ENCODE measurements at regions of chr3 and their contacts with region 1.

Region 1: GRCh38 chr3:184362668-184363540 is 1.4 kb downstream of the POLR2H start:
- DNase-seq: peak; percentile 98
- H3K4me3 ChIP-seq: peak overlapping the region; percentile 75 to 88 (median 85)
- H3K27ac ChIP-seq: peak overlapping the region; percentile 80
- H3K4me1 ChIP-seq: peaks cover 20% of the 10 kb centered on the region
- H3K27me3 ChIP-seq: no peaks in the 10 kb centered on the region
- CTCF ChIP-seq: peak; percentile 27 to 58

Region 2: DNA sequence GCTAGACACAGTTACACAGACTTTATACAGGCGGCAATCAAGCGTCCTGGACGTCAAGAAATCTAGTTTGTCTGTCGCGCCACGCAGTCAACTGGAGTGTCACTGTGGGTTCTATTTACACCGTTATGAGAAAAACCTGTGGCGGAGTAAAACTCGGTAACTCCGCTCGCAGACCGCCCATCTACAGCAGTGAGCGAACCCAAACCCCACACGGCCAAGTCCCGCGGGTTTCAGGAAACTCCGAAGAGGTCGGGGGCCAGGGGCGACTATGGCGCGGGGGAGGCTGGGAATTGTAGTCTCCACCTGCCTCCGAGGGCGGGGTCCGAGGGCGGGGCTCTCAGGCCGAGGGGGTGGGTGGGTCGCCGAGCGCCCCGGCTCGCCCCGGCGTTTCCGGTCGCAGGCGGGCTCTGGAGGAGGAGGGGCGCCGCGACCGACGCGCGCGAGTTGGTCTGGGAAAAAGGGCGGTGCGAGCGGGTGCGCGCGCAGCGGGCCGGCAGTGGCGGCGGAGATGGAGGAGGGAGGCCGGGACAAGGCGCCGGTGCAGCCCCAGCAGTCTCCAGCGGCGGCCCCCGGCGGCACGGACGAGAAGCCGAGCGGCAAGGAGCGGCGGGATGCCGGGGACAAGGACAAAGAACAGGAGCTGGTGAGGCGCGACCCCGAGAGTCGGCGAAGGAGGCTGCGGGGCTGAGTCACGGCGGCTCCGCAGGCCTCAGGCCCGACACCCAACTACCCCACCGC is 64.0 kb before region 1 on chr3 and contains the start of gene PSMD2:
- CTCF ChIA-PET with region 1: interaction called, 4 read pairs
- dilution Hi-C with region 1: no loop called
- in situ Hi-C with region 1: no loop called
- intact Hi-C with region 1: loop called (anchors 2 kb)
- DNase-seq: peak; percentile 95
- H3K4me3 ChIP-seq: peak within 1 kb of the TSS; percentile 80 to 100 (median 90)
- H3K27ac ChIP-seq: peak within 1 kb of the TSS; percentile 79
- H3K4me1 ChIP-seq: peaks cover 16% of the 10 kb centered on the region
- H3K27me3 ChIP-seq: no peaks in the 10 kb centered on the region
- CTCF ChIP-seq: no peak
- total RNA-seq, gene PSMD2: 276 to 541 TPM

Region 3: DNA sequence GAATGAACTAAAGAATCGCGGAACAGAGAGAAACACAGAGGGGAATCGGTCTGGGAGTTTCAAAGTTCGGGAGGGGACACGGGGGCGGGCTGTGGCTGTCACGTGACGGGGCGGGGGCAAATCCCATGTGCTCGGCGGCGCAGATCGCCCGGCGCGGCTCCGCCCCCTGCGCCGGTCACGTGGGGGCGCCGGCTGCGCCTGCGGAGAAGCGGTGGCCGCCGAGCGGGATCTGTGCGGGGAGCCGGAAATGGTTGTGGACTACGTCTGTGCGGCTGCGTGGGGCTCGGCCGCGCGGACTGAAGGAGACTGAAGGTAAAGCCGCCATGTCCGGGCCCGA is 48.6 kb before region 1 on chr3 and contains the start of gene EIF4G1:
- CTCF ChIA-PET with region 1: no interaction called
- dilution Hi-C with region 1: no loop called
- in situ Hi-C with region 1: no loop called
- intact Hi-C with region 1: loop called (anchors 1 kb)
- DNase-seq: peak; percentile 92
- H3K4me3 ChIP-seq: peak within 1 kb of the TSS; percentile 45 to 81 (median 73)
- H3K27ac ChIP-seq: peak within 1 kb of the TSS; percentile 69
- H3K4me1 ChIP-seq: peaks cover 22% of the 10 kb centered on the region
- H3K27me3 ChIP-seq: no peaks in the 10 kb centered on the region
- CTCF ChIP-seq: no peak
- total RNA-seq, gene EIF4G1: 278 to 534 TPM

Region 4: DNA sequence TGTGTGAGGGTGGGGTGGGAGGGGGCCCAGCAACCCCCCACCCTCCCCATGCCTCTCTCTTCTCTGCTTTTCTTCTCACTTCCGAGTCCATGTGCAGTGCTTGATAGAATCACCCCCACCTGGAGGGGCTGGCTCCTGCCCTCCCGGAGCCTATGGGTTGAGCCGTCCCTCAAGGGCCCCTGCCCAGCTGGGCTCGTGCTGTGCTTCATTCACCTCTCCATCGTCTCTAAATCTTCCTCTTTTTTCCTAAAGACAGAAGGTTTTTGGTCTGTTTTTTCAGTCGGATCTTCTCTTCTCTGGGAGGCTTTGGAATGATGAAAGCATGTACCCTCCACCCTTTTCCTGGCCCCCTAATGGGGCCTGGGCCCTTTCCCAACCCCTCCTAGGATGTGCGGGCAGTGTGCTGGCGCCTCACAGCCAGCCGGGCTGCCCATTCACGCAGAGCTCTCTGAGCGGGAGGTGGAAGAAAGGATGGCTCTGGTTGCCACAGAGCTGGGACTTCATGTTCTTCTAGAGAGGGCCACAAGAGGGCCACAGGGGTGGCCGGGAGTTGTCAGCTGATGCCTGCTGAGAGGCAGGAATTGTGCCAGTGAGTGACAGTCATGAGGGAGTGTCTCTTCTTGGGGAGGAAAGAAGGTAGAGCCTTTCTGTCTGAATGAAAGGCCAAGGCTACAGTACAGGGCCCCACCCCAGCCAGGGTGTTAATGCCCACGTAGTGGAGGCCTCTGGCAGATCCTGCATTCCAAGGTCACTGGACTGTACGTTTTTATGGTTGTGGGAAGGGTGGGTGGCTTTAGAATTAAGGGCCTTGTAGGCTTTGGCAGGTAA is 17.4 kb before region 1 on chr3:
- CTCF ChIA-PET with region 1: no interaction called
- dilution Hi-C with region 1: no loop called
- in situ Hi-C with region 1: no loop called
- intact Hi-C with region 1: loop called (anchors 1 kb)
- DNase-seq: peak; percentile 72
- H3K4me3 ChIP-seq: no peak overlapping the region
- H3K27ac ChIP-seq: no peak overlapping the region
- H3K4me1 ChIP-seq: peaks cover 45% of the 10 kb centered on the region
- H3K27me3 ChIP-seq: no peaks in the 10 kb centered on the region
- CTCF ChIP-seq: peak; percentile 43 to 72

Region 5: DNA sequence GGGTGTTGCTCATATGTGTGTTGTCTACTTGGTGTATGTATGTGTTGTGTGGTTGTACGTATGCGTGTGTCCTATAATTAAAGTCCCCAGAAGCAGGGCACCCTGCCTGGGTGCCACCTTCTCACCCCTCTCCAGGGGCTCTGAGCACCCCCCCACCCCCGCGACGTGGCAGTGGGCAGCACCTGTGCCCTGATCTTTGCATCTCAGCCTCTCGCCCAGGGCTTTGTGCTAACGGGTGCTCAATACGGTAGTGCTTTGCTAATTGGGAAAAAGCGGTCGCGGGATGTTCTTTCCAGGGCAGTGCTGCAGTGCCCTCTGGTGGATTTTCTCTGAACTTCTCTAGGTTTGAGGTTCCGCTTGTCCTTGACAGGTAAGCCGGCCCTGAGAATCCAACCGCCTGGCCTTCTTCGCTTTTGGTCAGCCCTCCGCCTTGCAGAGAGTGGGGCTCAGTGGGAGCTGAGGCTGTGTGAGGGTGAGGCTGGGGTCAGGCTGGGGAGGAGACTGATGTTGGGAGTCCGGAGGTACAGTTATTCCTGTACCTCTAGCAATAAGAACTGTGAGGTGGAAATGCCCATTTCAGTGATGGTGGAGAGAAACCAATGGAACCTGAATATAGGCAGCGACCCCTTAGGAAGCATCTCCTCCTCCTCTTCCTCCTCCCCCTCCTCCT is 181.1 kb after region 1 on chr3:
- CTCF ChIA-PET with region 1: no interaction called
- dilution Hi-C with region 1: loop called (anchors 5 kb)
- in situ Hi-C with region 1: no loop called
- intact Hi-C with region 1: loop called (anchors 2 kb)
- DNase-seq: peak; percentile 72
- H3K4me3 ChIP-seq: no peak overlapping the region
- H3K27ac ChIP-seq: no peak overlapping the region
- H3K4me1 ChIP-seq: peaks cover 2% of the 10 kb centered on the region
- H3K27me3 ChIP-seq: no peaks in the 10 kb centered on the region
- CTCF ChIP-seq: peak; percentile 84 to 86

Region 6: GRCh38 chr3:184556582-184557347 is 193.9 kb after region 1 on chr3:
- CTCF ChIA-PET with region 1: no interaction called
- dilution Hi-C with region 1: no loop called
- in situ Hi-C with region 1: no loop called
- intact Hi-C with region 1: no loop called
- DNase-seq: no peak
- H3K4me3 ChIP-seq: no peak overlapping the region
- H3K27ac ChIP-seq: no peak overlapping the region
- H3K4me1 ChIP-seq: peaks cover 8% of the 10 kb centered on the region
- H3K27me3 ChIP-seq: no peaks in the 10 kb centered on the region
- CTCF ChIP-seq: no peak

Region 7: DNA sequence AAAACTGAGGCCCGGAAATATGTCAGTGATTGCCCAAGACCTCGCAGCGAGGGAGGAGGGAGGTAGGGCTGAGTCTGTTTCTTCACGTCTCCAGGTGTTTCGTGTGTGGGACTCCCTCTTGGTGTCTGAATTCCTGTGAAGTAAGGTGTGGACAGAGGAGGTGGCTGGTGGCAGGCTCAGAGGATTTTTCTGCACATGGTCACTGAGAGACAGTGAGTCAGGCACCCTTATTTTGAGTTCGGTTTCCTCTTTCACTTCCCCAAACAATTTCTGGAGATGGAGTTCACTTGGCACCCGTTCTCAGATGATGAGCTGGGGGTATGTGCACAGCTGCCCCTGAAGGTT is 402.8 kb after region 1 on chr3:
- CTCF ChIA-PET with region 1: no interaction called
- dilution Hi-C with region 1: no loop called
- in situ Hi-C with region 1: no loop called
- intact Hi-C with region 1: loop called (anchors 10 kb)
- DNase-seq: peak; percentile 95
- H3K4me3 ChIP-seq: no peak overlapping the region
- H3K27ac ChIP-seq: peak overlapping the region; percentile 99
- H3K4me1 ChIP-seq: peaks cover 26% of the 10 kb centered on the region
- H3K27me3 ChIP-seq: no peaks in the 10 kb centered on the region
- CTCF ChIP-seq: no peak

Region 8: DNA sequence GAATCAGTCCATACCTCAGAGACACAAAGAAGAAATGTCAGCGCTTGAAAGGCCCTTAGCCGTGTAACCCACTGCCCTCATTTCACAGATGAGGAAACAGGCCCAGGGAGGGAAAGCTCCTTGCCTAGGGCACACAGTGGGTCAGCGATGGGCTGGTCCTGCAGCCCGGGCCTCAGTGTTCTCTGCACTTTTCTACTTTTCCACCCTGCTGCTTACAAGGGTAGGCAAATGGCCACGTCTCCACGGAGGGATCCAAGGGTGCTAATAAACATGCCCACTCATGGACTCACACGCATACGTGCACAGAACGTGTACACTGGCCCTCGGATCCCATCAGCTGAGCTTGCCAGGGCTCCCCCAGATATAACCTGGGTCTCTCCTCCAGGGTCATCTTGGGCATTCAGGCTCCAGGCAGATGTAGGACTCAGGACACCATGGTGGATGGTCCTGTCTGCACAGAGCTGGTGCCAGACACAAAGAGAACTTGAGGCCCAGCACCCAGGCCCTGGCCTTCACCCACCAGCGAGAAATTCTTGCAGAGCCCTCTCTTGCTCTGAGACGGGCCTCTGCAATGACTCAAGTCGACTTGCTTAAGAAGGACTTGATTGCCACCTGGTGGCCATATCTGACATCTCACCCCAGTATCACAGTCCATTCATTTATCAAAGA is 414.6 kb after region 1 on chr3:
- CTCF ChIA-PET with region 1: no interaction called
- dilution Hi-C with region 1: no loop called
- in situ Hi-C with region 1: loop called in 1 of 2 experiments (anchors 25 kb)
- intact Hi-C with region 1: no loop called
- DNase-seq: peak; percentile 80
- H3K4me3 ChIP-seq: no peak overlapping the region
- H3K27ac ChIP-seq: no peak overlapping the region
- H3K4me1 ChIP-seq: peaks cover 18% of the 10 kb centered on the region
- H3K27me3 ChIP-seq: no peaks in the 10 kb centered on the region
- CTCF ChIP-seq: peak; percentile 74